ENCODE measurements at regions of chr2 and their contacts with region 1.

Region 1: DNA sequence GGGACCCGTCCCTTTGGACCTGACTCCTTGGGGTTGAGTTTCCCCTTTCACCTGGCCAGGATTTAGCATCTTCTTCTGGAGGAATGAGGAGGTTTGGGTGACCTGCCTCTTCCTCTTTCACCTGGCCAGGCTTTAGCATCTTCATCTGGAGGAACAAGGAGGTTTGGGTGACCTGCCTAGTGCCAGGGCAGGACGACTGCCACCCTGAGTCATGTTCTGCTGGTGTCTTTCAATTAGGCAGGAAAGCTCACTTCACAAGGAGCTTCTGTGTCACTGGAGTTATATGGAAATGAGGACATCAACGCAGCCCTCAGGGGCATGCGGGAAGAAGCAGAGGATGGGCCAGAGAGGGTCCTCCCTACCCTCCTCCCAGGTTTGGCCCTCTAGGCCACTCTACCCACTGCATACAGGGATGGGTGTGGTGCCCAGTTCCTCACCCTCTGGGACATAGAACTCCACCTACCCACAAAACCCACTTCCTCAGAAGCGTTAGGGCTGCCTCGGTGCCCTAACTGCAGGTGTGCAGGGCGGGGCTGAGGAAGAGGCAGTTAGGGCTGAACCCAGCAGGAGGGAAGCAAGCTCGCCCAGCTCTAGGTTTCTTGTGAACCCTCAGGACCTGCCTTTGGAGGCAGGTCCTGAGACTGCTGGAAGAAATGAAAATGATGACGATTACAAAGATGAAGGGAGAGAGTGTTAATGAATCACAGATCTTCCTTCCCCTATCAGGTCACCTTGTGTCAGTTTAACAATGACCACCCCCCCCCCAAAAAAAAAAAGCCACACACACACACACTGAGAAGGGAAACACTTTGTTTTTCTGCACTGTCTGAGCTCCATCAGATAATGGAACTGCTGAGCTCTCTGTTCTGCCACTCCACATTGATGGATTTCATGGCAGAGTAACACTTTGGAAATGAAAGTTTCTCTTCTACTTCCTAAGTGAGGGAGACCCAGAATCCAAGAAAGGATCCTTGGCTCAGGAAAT is 71.0 kb downstream of the ARL4C start:
- DNase-seq: no peak
- H3K4me3 ChIP-seq: no peak overlapping the region
- CTCF ChIP-seq: no peak
- POLR2A ChIP-seq: no peak

Region 2: DNA sequence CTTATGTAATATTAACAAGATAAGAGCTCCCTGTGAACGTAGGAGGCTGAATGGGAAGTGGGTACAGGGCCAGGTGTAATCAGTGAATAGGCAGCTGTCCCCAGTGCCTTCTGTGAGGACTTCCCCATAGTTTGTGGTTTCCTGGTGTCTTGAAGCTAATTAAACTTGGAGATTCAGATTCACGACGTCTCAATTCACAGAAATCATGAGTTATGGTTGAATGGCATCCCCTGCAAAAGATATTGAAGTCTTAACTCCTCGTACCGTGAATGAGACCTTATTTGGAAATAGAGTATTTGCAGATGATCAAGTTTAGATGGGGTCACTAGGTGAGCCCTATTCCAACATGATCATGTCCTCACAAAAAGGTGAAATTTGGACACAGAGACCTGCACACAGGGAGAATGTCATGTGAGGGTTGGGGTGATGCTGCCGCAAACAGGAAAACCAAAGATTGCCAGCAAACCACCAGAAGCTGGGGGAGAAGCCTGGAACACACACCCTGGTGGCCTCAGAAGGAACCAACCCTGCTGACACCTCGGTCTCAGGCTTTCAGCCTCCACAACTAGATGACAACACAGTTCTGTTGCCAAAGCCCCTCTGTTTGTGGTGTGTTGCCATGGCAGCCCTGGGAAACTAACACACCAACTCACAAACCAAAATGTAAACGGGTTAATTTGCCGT is 57.8 kb after region 1 on chr2:
- intact Hi-C with region 1: loop called (anchors 10 kb)
- DNase-seq: no peak
- H3K4me3 ChIP-seq: no peak overlapping the region
- CTCF ChIP-seq: no peak
- POLR2A ChIP-seq: no peak

Measured in lower leg skin (tissue), 4 donors.